ENCODE measurements at regions of chrX and their contacts with region 1.

Region 1: GRCh38 chrX:84729809-84730208 is 227.6 kb upstream of the HDX start:
- H3K4me3 ChIP-seq: no peak overlapping the region
- H3K27ac ChIP-seq: no peak overlapping the region
- H3K4me1 ChIP-seq: 0 out of 2 replicates have a peak, but pooled peaks cover 2% of the 10 kb centered on the region
- CTCF ChIP-seq: peak; percentile 80

Region 2: GRCh38 chrX:83984961-83985360 is 744.8 kb before region 1 on chrX:
- CTCF ChIA-PET with region 1: no interaction called
- POLR2A ChIA-PET with region 1: no interaction called
- H3K4me3 ChIP-seq: no peak overlapping the region
- H3K27ac ChIP-seq: no peak overlapping the region
- H3K4me1 ChIP-seq: no peaks in the 10 kb centered on the region
- CTCF ChIP-seq: no peak

Region 3: DNA sequence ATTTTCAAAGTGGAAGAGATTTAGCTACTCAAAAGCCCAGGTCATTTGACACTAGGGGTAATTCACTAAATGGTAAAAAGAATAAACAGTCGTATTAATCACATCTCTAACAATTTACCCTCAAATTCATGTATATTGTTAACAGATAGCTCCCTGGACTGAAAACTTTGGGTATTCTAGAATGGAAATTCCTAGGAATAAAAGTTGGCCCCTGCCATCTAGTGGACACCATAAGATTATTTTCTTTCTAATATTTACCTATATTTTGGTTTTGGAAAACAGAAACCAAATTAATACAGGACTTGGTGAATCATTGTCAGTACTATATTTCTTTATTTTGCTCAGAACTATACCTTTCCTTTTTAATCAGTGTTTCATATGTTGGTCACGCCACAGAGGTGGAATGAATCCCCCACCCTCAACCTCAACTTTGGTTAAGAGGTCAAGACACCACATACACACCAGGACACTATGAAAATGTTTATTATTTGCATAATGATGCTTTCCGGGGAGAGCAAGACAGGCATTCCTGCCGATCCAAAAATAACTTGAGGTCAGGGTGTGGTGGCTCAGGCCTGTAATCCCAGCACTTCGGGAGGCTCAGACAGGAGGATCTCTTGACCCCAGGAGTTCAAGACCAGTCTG is 177.6 kb after region 1 on chrX:
- CTCF ChIA-PET with region 1: interaction called, 31 read pairs
- POLR2A ChIA-PET with region 1: no interaction called
- H3K4me3 ChIP-seq: no peak overlapping the region
- H3K27ac ChIP-seq: no peak overlapping the region
- H3K4me1 ChIP-seq: no peaks in the 10 kb centered on the region
- CTCF ChIP-seq: no peak

Measured in HEK293 (cell line).